ENCODE measurements at regions of chr19 and their contacts with region 1.

Region 1: GRCh38 chr19:12055783-12056182 is 3.0 kb upstream of the ZNF878 start:
- DNase-seq: no peak
- ATAC-seq: no peak
- H3K4me3 ChIP-seq: no peak overlapping the region
- H3K27ac ChIP-seq: no peak overlapping the region
- H3K4me1 ChIP-seq: peaks cover 8% of the 10 kb centered on the region
- H3K27me3 ChIP-seq: no peaks in the 10 kb centered on the region
- CTCF ChIP-seq: no peak
- POLR2A ChIP-seq: no peak

Region 2: DNA sequence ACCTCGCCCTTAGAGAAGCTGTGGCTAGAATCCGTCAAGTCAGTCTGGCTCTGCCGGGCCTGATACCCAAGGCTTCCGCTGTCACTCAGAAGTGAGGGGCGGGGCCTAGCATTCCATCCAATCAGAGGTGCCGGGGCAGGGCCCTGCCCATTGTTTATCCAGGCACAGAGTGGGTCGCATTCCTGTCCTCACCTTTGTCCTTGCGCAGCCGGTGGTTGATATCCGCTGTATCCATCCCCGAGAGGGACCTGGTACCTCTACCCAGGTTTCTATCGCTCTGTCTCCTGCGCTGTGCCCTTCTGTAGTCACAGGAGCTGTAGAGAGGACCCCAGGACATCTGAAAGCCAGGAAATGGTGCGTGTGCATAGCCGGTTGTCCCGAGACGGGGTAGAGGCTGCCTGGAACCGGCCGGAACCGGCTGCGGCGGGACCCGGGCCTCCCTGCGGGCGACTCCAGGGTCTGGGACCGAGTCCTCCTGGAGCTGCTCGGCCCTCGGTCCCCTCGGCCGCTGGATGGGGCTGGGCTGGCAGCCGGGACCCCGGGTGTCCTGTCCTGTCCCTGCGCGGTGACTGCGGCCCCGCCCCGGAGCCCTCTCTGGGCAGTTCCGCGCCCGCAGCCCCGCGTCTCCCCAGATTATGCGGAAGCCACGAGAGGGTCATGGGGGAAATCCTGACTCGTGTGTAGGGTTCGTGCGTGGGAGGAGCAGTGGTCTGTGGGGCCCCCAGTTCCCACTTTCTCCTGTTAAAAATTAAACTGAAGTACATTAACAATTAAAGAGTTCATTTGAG is 90.7 kb before region 1 on chr19 and contains the start of gene ZNF763:
- intact Hi-C with region 1: no loop called
- DNase-seq: peak; percentile 92 to 97 (median 96)
- ATAC-seq: peak; percentile 96
- H3K4me3 ChIP-seq: peak within 1 kb of the TSS; percentile 32 to 76
- H3K27ac ChIP-seq: peak within 1 kb of the TSS; percentile 77 to 93 (median 86)
- H3K4me1 ChIP-seq: peaks cover 13% of the 10 kb centered on the region
- H3K27me3 ChIP-seq: no peaks in the 10 kb centered on the region
- CTCF ChIP-seq: no peak
- POLR2A ChIP-seq: peak in 2 of 3 donors; percentile 75 to 85
- total RNA-seq, gene ZNF763: 0.66 to 2.9 TPM

Region 3: DNA sequence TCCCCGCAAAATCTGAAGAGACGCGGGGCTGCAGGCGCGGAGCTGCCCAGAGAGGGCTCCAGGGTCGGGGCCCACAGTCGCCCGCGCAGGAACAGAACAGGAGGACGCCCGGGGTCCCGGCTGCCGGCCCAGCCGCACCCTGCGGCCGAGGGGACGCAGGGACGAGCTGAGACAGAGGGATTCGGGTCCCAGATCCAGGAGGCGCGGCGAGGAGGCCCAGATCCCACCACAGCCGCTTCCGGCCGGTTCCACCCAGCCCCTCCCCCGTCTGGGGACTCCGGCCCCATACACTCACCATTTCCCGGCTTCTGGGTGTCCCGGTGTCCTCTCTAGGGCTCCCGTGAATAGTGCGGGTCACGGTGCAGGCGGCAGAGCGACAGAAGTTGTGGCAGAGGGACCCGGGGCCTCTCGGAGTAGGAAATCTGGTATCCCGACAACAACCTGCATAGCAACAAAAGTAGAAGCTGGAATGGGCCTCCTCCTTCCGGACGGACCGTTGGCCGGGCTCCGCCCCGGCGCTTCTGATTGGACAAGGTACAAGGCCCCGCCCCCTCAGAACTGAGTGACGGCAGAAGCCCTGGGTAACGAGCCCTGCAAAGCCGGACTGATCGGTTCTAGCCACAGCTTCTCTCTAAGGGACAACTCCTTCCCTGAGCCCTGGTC is 84.2 kb after region 1 on chr19 and contains the start of gene ZNF20:
- intact Hi-C with region 1: loop called (anchors 5 kb)
- DNase-seq: peak; percentile 98 to 99 (median 98)
- ATAC-seq: peak; percentile 99
- H3K4me3 ChIP-seq: peak within 1 kb of the TSS; percentile 76 to 83
- H3K27ac ChIP-seq: peak within 1 kb of the TSS; percentile 66 to 84 (median 76)
- H3K4me1 ChIP-seq: peaks cover 20% of the 10 kb centered on the region
- H3K27me3 ChIP-seq: no peaks in the 10 kb centered on the region
- CTCF ChIP-seq: no peak
- POLR2A ChIP-seq: peak in 2 of 3 donors; percentile 60 to 74
- total RNA-seq, gene ZNF20: 0.66 to 4.9 TPM